ENCODE measurements at regions of chrX and their contacts with region 1.

Region 1: GRCh38 chrX:136209016-136209738 is 42.0 kb downstream of the MAP7D3 start:
- DNase-seq: no peak

Region 2: DNA sequence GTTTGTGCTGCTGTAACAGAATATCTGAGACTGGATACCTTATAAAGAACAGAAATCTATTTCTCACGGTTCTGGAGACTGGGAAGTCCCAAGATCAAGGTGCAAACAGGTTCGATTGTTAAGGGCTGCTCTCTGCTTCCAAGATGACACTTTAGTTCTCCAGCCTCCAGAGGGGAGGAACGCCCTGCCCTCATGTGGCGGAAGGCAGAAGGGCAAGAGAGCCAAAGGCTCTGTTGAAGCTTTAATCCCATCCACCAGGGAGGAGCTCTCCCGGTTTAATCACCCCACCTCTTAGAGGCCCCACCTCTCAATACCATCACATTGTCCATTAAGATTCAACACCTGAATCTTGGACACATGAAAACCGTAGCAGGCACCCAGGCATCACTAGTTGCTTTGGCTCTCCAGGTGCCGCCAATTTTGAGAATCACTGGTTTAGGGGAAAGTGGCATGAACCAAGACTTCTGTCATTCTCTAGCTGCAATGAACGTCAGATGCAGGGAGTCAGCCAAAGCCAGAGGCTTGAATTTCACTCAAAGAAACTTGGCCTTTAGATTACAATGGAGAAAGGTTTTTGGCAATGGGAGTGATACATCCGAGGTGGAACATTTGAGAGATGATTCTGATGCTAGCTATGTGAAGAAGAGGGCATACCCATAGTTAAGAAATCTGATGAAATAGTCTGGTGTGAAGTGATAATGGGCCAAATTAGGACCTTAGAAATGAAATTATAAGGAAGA is 46.2 kb before region 1 on chrX:
- intact Hi-C with region 1: loop called in 1 of 2 experiments (anchors 10 kb)
- DNase-seq: peak; percentile 89

Region 3: DNA sequence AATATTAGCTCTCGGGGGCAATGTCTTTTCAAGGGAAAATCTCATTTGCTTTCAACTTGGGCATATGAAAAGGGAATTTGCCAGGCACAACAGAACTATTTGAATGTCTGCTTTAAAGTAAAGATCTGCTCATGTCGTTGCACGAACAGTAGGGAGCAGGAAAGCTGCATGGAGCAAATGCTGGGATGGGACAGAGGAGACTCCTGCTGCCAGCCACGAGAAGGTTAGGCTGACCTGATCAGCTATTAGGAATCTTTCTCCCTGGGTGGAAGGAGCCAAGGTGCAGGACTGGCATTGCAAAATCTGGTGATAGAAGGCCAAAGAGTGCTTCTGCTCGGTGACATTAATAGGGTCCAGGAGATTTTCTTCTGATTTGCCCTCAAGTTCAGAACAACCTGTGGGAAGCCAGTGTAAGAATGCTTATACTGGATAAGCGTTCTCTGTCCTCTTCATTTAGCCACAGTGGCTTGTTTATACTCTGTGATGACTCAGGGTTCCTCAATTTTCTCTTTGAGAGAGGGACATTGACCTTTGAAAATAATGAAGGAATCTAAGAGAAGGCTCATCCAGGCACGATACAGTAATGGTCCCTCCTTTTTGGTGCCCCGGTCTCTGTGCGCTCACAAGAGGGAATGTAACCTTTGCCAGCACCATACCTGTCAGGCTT is 38.9 kb before region 1 on chrX:
- intact Hi-C with region 1: loop called in 1 of 2 experiments (anchors 5 kb)
- DNase-seq: no peak

Region 4: DNA sequence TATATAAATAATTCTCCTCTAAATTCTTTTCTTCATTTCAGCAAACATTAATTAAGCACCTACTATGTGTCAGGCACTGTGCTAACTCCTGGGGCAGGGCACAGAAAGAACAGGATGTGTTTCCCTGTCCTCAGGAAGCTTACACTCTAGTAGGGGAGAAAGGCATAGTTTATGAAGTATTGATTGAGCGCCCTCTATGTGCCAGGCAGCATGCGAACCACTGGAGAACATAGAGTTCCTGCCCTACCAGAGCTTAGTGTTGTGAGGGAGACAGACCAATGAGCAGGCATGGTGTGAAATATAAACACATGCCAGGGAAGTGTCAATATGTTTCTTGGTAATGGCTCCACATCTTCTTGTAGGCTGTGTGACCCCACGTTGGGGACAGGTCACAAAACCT is 95.3 kb after region 1 on chrX:
- intact Hi-C with region 1: no loop called
- DNase-seq: no peak

Measured in posterior vena cava (tissue), 2 donors.